Heart right ventricle (tissue), 16 donors: ENCODE measurements at regions of chr7 and their contacts with region 1.

Region 1: DNA sequence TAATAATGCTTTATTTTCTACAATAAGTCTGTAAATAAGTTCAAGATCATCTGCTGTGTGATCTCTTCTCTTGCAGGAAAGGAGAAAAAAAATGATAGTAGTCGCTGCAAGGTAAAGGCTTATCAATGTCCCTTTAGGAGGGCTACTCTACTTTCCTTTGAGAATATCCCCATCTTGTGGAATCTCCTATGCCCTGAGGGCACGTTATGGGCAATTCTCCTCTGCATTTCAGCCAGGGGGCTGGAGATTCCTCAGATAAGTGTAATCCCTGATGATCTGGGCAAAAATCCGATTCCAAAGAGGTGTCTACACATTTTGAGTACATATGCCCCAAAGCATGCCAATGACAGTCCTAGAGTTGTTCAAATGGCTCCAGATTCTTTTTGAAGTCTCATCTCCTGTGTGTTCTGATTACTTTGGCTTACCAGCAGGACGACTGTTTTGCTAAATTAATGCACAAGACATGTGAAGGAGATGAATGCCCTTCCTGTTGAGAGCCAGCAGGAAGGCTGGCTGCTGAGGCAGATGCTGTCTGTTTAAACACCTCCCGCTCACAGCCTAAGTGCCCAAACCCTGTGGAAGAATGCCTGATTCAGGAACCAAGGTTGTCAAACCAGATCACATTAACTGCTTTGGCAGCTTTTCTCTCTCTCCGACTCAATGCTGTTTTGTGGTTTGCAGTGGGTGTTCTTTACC is 171.2 kb upstream of the COL1A2 start:
- DNase-seq: no peak
- ATAC-seq: peak in 3 of 8 donors; percentile 55 to 74 (median 63)
- H3K4me3 ChIP-seq: no peak overlapping the region
- H3K27ac ChIP-seq: no peak overlapping the region
- H3K4me1 ChIP-seq: peaks cover 0 to 3% (median 0%) of the 10 kb centered on the region in 9 donors
- H3K27me3 ChIP-seq: no peaks in the 10 kb centered on the region
- CTCF ChIP-seq: peak in 8 of 9 donors; percentile 13 to 65 (median 54)

Region 2: DNA sequence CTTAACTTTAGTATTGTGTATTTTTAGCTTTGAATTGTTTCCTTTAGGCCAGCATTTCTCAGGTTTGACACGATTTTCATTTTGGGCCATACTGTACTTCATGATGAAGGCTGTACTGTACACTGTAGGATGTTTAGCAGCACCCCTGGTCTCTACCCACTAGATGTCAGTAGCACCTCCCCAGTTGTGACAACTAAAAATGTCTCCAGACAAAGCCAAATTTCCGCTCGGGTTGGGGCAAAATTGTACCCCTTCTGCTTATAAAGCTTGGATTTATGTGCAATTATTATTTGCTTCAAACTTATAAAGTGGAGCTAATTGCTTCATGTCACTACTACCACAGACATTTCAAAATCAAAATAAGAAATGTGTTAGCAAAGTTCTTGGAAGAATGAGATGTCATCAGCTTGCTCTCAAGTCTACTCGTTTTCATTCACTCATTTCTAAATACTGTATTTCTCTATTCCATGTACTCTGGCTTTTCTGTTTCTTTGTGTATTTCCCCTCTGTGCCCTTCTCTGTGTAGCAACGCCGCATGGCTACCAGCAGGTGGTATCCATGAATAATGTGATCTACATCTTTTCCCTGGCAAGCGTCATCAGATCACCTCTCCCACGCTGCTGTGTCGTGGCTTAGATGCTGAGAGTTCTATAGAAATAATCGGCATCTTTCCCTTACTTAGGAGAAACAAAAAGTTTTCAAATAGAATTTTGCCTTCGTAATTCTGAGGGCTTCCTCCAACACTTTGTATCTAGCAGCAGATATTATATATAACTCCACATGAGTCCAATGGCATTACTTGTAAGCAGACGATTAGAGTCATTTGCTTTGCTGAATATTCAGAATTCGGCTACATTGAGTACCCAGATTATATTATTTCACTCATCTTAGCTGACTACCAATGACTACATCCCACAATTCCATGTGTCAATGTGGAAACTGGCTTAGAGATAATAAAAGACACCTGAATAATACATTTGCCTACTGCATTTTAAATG is 601.2 kb before region 1 on chr7:
- intact Hi-C with region 1: loop called in 1 of 10 experiments (anchors 10 kb)
- DNase-seq: no peak
- ATAC-seq: peak in 7 of 8 donors; percentile 28 to 78 (median 57)
- H3K4me3 ChIP-seq: peak overlapping the region in 2 of 10 donors; percentile 20 to 31
- H3K27ac ChIP-seq: no peak overlapping the region
- H3K4me1 ChIP-seq: no peaks in the 10 kb centered on the region
- H3K27me3 ChIP-seq: no peaks in the 10 kb centered on the region
- CTCF ChIP-seq: peak in 8 of 9 donors; percentile 3 to 59 (median 34)

Region 3: DNA sequence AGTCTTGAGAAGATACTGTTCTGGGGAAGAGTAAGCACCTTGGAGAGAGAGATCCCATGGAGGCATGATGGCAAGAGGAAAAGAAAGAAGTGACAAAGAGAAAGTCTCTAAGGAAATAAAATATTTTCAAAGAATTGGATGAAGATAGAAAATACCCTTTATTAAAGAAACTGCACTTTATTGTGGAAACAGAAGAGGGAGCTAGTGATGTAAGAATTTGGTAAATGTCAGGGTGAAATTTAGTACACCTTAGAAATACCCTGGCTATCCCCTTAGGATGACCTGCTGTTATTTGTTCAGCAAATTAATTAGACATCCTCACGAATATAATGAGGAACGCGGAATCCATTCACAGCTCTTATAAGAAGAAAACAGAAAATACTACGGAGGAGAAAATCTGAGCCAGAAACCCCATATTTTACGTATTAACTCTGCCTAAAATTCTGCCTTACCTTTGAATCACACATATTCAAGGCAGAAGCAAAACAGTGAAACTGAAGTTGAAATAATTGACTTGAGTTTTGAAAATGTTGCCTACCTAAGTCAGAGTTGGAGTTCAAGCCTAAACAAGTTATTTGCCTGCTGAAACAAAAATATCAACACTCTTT is 423.7 kb before region 1 on chr7:
- intact Hi-C with region 1: loop called in 1 of 10 experiments (anchors 10 kb)
- DNase-seq: no peak
- ATAC-seq: no peak
- H3K4me3 ChIP-seq: no peak overlapping the region
- H3K27ac ChIP-seq: no peak overlapping the region
- H3K4me1 ChIP-seq: no peaks in the 10 kb centered on the region
- H3K27me3 ChIP-seq: no peaks in the 10 kb centered on the region
- CTCF ChIP-seq: peak in 8 of 9 donors; percentile 23 to 65 (median 50)

Region 4: DNA sequence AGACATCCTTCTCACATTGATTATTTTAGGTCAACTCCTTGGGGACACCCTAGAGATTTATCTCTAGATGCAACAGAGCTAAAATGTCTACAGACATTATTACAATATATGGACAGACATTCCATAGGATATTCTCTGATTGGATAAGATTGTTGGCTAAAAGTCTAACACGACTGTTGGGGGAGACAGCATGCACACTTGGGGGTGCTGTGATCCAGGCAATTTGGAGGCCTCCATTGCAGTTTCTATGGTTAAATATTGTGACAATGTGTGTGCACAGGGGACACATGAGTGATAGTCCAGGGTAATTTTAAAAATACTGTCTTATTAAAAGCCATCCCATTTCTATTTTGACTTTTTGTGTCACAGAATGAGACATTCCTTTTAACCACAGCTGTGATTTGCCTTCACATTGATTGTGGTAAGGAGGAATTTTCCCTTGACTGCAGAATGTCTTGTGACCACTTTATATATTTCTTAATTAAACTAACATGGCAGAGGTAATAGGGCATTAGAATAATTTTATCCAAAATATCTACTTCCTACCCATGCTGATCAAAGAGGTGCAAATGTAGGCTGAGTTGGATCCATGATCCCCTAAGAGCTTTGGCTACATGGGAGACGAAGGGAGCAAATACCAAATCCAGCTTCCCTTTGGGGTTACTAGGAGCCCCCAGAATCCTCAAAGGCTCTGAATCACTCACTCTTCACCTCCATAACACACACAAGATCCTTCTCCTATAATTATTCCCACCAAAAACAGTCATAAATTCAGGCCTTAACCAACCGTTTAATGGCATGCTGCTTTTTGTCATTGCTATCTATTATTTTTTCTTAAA is 340.2 kb before region 1 on chr7:
- intact Hi-C with region 1: loop called in 1 of 10 experiments (anchors 2 kb)
- DNase-seq: no peak
- ATAC-seq: no peak
- H3K4me3 ChIP-seq: no peak overlapping the region
- H3K27ac ChIP-seq: no peak overlapping the region
- H3K4me1 ChIP-seq: no peaks in the 10 kb centered on the region
- H3K27me3 ChIP-seq: no peaks in the 10 kb centered on the region
- CTCF ChIP-seq: peak in 4 of 9 donors; percentile 21 to 49 (median 34)

Region 5: DNA sequence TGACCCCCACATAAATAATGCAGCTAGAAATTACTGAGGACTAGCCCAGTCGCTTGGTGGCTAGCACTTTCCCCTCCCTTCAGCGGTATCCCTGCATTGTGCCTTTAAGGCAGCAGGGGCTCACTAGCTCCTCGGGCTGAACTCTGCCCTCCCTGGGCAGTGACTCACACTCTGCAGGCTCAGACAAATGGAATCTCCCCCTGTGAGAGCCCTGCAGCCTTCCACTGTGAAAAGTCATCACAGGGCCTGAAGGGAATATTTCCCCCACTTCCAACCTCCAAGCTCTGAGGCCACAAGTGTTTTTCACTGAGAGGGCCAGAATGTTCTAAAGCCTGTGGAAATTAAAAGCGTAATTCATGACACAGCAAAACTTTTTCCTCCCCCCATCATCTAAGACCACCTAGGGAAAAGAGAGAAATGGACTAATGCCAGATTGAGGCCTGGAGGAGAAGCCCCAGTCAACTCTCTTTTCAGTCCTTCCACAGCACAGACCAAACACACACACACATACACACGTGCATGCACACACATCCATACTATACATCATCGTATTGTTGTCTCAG is 77.6 kb after region 1 on chr7:
- intact Hi-C with region 1: no loop called
- DNase-seq: peak; percentile 65 to 66
- ATAC-seq: peak; percentile 83 to 93 (median 86)
- H3K4me3 ChIP-seq: no peak overlapping the region
- H3K27ac ChIP-seq: peak overlapping the region; percentile 23 to 86 (median 70)
- H3K4me1 ChIP-seq: peaks cover 5 to 64% (median 27%) of the 10 kb centered on the region in 9 donors
- H3K27me3 ChIP-seq: peaks cover 0 to 6% (median 0%) of the 10 kb centered on the region in 7 donors
- CTCF ChIP-seq: peak in 1 of 9 donors; percentile 3